ENCODE measurements at regions of chr2 and their contacts with region 1.

Region 1: GRCh38 chr2:37570773-37571586 is 100.5 kb downstream of the CDC42EP3 start:
- DNase-seq: peak; percentile 98
- ATAC-seq: peak; percentile 87
- H3K4me3 ChIP-seq: peak overlapping the region; percentile 0; the same call in 1 of the 2 replicates
- H3K27ac ChIP-seq: peak overlapping the region; percentile 90
- H3K4me1 ChIP-seq: peaks cover 41% of the 10 kb centered on the region
- H3K27me3 ChIP-seq: no peaks in the 10 kb centered on the region
- CTCF ChIP-seq: no peak
- EP300 ChIP-seq: peak; percentile 86 to 87
- POLR2A ChIP-seq: peak; percentile 59
- RAD21 ChIP-seq: peak; percentile 45

Region 2: GRCh38 chr2:37244017-37244416 is 327.0 kb before region 1 on chr2:
- CTCF ChIA-PET with region 1: no interaction called
- POLR2A ChIA-PET with region 1: no interaction called
- RAD21 ChIA-PET with region 1: no interaction called
- SMC1A ChIA-PET with region 1: no interaction called
- in situ Hi-C with region 1: no loop called
- intact Hi-C with region 1: no loop called
- DNase-seq: peak; percentile 23
- ATAC-seq: peak; percentile 97
- H3K4me3 ChIP-seq: no peak overlapping the region
- H3K27ac ChIP-seq: no peak overlapping the region
- H3K4me1 ChIP-seq: peaks cover 6% of the 10 kb centered on the region
- H3K27me3 ChIP-seq: no peaks in the 10 kb centered on the region
- CTCF ChIP-seq: no peak
- EP300 ChIP-seq: no peak
- POLR2A ChIP-seq: no peak
- RAD21 ChIP-seq: no peak

Region 3: GRCh38 chr2:37543999-37544557 is 26.9 kb before region 1 on chr2:
- CTCF ChIA-PET with region 1: interaction called, 5 read pairs
- POLR2A ChIA-PET with region 1: interaction called, 39 read pairs
- RAD21 ChIA-PET with region 1: interaction called, 41 read pairs
- SMC1A ChIA-PET with region 1: interaction called, 246 read pairs
- in situ Hi-C with region 1: no loop called
- intact Hi-C with region 1: loop called (anchors 1 kb)
- DNase-seq: no peak
- ATAC-seq: no peak
- H3K4me3 ChIP-seq: no peak overlapping the region
- H3K27ac ChIP-seq: no peak overlapping the region
- H3K4me1 ChIP-seq: peaks cover 8% of the 10 kb centered on the region; the same call in 1 of the 2 replicates
- H3K27me3 ChIP-seq: no peaks in the 10 kb centered on the region
- CTCF ChIP-seq: no peak
- EP300 ChIP-seq: no peak
- POLR2A ChIP-seq: no peak
- RAD21 ChIP-seq: no peak

Region 4: DNA sequence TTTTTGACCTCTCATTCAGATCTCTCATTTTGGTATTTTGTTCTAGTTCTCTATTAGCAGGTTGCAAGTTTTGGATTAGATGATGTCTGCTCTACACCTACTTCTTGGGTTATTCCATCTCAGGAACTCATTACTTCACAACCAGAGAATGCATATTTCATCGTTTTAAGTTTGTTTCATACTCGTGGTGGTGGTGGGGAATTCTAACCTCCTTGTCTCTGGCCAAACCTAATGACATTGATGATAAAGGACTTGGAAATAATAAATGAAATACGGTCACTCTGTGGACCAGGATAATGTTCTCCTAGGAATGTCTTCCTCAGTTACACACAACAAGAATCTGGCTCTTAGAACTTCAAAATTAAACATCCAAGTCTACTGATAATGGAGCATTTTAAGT is 14.7 kb before region 1 on chr2:
- CTCF ChIA-PET with region 1: interaction called, 24 read pairs
- POLR2A ChIA-PET with region 1: interaction called, 74 read pairs
- RAD21 ChIA-PET with region 1: interaction called, 85 read pairs
- SMC1A ChIA-PET with region 1: interaction called, 246 read pairs
- in situ Hi-C with region 1: no loop called
- intact Hi-C with region 1: loop called (anchors 2 kb)
- DNase-seq: no peak
- ATAC-seq: no peak
- H3K4me3 ChIP-seq: no peak overlapping the region; the same call in 1 of the 2 replicates
- H3K27ac ChIP-seq: peak overlapping the region; percentile 69
- H3K4me1 ChIP-seq: peaks cover 64% of the 10 kb centered on the region
- H3K27me3 ChIP-seq: no peaks in the 10 kb centered on the region
- CTCF ChIP-seq: no peak
- EP300 ChIP-seq: no peak
- POLR2A ChIP-seq: no peak
- RAD21 ChIP-seq: no peak

Region 5: GRCh38 chr2:37600735-37601134 is 29.8 kb after region 1 on chr2:
- CTCF ChIA-PET with region 1: no interaction called
- POLR2A ChIA-PET with region 1: interaction called, 7 read pairs
- RAD21 ChIA-PET with region 1: interaction called, 6 read pairs
- SMC1A ChIA-PET with region 1: interaction called, 10 read pairs
- in situ Hi-C with region 1: no loop called
- intact Hi-C with region 1: no loop called
- DNase-seq: no peak
- ATAC-seq: peak; percentile 91
- H3K4me3 ChIP-seq: peak overlapping the region; percentile 23; the same call in 1 of the 2 replicates
- H3K27ac ChIP-seq: peak overlapping the region; percentile 48; the same call in 1 of the 2 replicates
- H3K4me1 ChIP-seq: peaks cover 31% of the 10 kb centered on the region
- H3K27me3 ChIP-seq: no peaks in the 10 kb centered on the region
- CTCF ChIP-seq: no peak
- EP300 ChIP-seq: peak in 1 of 2 experiments; percentile 52; a peak in 1 of 4 replicates
- POLR2A ChIP-seq: no peak
- RAD21 ChIP-seq: no peak

Region 6: DNA sequence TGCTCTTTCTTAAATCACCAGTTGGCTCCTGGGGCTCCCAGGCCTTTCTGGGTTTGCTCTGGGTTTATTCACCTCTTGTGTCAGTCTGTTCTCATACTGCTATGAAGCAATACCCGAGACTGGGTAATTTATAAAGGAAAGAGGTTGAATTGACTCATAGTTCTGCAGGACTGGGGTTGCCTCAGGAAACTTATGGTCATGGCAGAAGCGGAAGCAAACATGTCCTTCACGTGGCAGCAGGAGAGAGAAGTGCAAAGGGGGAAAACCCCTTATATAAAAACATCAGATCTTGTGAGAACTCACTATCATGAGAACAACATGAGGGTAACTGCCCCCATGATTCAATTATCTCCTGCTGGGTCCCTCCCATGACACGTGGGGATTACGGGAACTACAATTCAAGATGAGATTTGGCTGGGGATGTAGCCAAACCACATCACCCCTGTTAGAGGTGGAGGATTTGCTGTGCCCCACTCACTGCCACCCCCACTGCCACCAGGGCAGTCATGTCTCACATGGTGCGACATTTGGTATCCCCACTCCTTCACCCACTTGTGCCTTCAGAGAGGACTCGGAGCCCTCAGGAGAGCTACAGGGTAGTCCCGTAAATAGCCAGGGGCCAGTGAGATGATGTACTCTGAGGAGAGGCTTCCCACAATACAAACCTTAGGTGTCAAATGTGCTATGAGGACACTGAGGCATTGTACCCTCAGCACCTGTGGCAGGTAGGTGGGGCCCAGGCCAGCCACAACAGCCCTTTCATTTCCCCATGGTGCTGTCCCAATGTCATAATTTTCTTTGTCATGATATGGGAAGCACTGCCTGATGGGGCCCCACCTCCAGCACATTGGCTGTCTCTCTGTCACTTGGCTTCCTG is 64.8 kb after region 1 on chr2:
- CTCF ChIA-PET with region 1: interaction called, 3 read pairs
- POLR2A ChIA-PET with region 1: no interaction called
- RAD21 ChIA-PET with region 1: interaction called, 7 read pairs
- SMC1A ChIA-PET with region 1: interaction called, 25 read pairs
- in situ Hi-C with region 1: no loop called
- intact Hi-C with region 1: loop called (anchors 1 kb)
- DNase-seq: peak; percentile 92
- ATAC-seq: peak; percentile 80
- H3K4me3 ChIP-seq: no peak overlapping the region
- H3K27ac ChIP-seq: peak overlapping the region; percentile 91
- H3K4me1 ChIP-seq: peaks cover 26% of the 10 kb centered on the region
- H3K27me3 ChIP-seq: no peaks in the 10 kb centered on the region
- CTCF ChIP-seq: no peak
- EP300 ChIP-seq: peak; percentile 27 to 69; a peak in 3 of 4 replicates
- POLR2A ChIP-seq: peak; percentile 14
- RAD21 ChIP-seq: peak; percentile 37; the same call in 1 of the 2 replicates

Region 7: DNA sequence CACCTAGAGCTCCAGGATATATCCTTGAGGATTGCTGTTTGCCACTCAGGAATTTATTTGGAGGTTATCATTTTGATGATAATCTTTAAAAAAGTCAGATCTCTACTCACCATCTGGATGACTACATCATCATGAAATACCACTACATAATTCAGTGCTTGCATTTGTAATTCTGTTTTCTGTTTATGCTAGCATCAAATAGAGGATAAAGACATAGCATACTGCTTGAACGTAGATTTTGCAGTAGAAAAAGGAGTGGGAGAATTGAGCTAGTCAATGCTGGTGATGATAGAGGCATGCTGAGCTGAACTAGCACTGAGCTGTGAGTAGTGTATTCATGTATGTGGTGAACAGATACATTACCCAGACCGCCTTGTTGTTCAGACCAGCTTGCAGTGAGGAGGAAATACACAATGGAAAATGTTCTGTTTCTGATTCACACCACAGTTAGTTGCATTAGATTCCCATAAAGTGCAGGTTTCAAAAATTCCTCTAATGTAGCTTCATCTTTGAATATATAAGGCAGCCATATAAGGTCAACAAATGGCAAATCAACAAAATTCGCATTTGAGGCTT is 169.3 kb after region 1 on chr2:
- CTCF ChIA-PET with region 1: no interaction called
- POLR2A ChIA-PET with region 1: no interaction called
- RAD21 ChIA-PET with region 1: no interaction called
- SMC1A ChIA-PET with region 1: no interaction called
- in situ Hi-C with region 1: no loop called
- intact Hi-C with region 1: no loop called
- DNase-seq: no peak
- ATAC-seq: no peak
- H3K4me3 ChIP-seq: no peak overlapping the region
- H3K27ac ChIP-seq: no peak overlapping the region
- H3K4me1 ChIP-seq: no peaks in the 10 kb centered on the region
- H3K27me3 ChIP-seq: no peaks in the 10 kb centered on the region
- CTCF ChIP-seq: no peak
- EP300 ChIP-seq: no peak
- POLR2A ChIP-seq: no peak
- RAD21 ChIP-seq: no peak

Region 8: DNA sequence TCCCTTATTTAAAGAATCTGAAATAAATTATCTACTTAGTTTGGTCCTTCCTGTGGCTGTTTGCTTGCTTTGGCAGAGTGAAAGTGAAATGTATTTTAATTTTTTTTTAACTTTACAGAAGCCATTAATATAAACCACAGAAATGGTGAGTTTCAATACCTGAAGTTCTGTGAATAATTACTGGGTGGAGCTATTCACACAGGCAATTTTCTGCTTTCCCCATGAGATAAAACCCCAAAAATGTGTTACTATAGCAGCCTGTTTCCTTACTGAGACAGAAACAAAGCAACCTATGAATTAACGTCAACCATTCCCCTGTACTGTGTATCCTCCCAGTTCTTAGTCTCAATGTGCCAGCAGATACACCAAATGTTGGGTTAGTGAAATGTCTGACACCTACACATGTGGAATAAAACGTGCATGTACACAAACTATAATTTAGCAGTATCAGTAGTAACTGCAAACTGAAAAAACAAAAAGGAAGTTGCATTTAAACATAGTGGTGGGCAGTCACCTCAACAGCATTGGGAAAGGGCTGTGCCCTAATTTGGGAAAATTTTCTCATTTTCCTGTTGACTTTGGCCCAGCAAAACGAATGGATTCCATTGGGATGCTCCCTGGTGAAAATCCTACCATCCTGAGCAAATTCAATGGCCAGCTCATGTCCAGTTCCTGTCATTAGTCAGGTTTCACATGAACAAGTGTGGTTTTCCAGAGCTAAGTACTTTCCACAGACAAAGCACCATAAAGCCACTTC is 281.0 kb after region 1 on chr2:
- CTCF ChIA-PET with region 1: no interaction called
- POLR2A ChIA-PET with region 1: no interaction called
- RAD21 ChIA-PET with region 1: interaction called, 3 read pairs
- SMC1A ChIA-PET with region 1: interaction called, 3 read pairs
- in situ Hi-C with region 1: no loop called
- intact Hi-C with region 1: loop called (anchors 1 kb)
- DNase-seq: peak; percentile 80
- ATAC-seq: peak; percentile 86
- H3K4me3 ChIP-seq: peak overlapping the region; percentile 17; the same call in 1 of the 2 replicates
- H3K27ac ChIP-seq: peak overlapping the region; percentile 67
- H3K4me1 ChIP-seq: peaks cover 32% of the 10 kb centered on the region
- H3K27me3 ChIP-seq: no peaks in the 10 kb centered on the region
- CTCF ChIP-seq: peak in 1 of 3 experiments; percentile 8; a peak in 1 of 6 replicates
- EP300 ChIP-seq: peak; percentile 23 to 53; a peak in 1 of 4 replicates
- POLR2A ChIP-seq: no peak
- RAD21 ChIP-seq: peak; percentile 45

Measured in GM12878 (cell line).